Natural killer cell (primary cell): ENCODE measurements at regions of chr3 and their contacts with region 1.

Region 1: GRCh38 chr3:111895079-111895478 is 36.0 kb downstream of the PHLDB2 start:
- DNase-seq: no peak
- ATAC-seq: peak in 2 of 3 donors; percentile 45 to 52
- H3K4me3 ChIP-seq: no peak overlapping the region
- H3K4me3 Mint-ChIP-seq: no peak overlapping the region
- H3K27ac ChIP-seq: no peak overlapping the region
- H3K27ac Mint-ChIP-seq: peak overlapping the region in 1 of 2 donors; percentile 12
- H3K4me1 ChIP-seq: no peaks in the 10 kb centered on the region
- H3K4me1 Mint-ChIP-seq: peaks cover 33 to 38% of the 10 kb centered on the region in 2 donors
- H3K27me3 ChIP-seq: no peaks in the 10 kb centered on the region
- H3K27me3 Mint-ChIP-seq: no peaks in the 10 kb centered on the region
- CTCF ChIP-seq: no peak

Region 2: GRCh38 chr3:111967651-111968274 is 72.7 kb after region 1 on chr3:
- intact Hi-C with region 1: loop called (anchors 1 kb)
- DNase-seq: peak; percentile 66 to 89
- ATAC-seq: peak; percentile 86 to 98 (median 95)
- H3K4me3 ChIP-seq: no peak overlapping the region
- H3K4me3 Mint-ChIP-seq: no peak overlapping the region
- H3K27ac ChIP-seq: no peak overlapping the region
- H3K27ac Mint-ChIP-seq: peak overlapping the region; percentile 8 to 62
- H3K4me1 ChIP-seq: no peaks in the 10 kb centered on the region
- H3K4me1 Mint-ChIP-seq: peaks cover 5 to 7% of the 10 kb centered on the region in 2 donors
- H3K27me3 ChIP-seq: no peaks in the 10 kb centered on the region
- H3K27me3 Mint-ChIP-seq: no peaks in the 10 kb centered on the region
- CTCF ChIP-seq: peak; percentile 96